Esophagus muscularis mucosa (tissue), 4 donors: ENCODE measurements at regions of chr1 and their contacts with region 1.

Region 1: DNA sequence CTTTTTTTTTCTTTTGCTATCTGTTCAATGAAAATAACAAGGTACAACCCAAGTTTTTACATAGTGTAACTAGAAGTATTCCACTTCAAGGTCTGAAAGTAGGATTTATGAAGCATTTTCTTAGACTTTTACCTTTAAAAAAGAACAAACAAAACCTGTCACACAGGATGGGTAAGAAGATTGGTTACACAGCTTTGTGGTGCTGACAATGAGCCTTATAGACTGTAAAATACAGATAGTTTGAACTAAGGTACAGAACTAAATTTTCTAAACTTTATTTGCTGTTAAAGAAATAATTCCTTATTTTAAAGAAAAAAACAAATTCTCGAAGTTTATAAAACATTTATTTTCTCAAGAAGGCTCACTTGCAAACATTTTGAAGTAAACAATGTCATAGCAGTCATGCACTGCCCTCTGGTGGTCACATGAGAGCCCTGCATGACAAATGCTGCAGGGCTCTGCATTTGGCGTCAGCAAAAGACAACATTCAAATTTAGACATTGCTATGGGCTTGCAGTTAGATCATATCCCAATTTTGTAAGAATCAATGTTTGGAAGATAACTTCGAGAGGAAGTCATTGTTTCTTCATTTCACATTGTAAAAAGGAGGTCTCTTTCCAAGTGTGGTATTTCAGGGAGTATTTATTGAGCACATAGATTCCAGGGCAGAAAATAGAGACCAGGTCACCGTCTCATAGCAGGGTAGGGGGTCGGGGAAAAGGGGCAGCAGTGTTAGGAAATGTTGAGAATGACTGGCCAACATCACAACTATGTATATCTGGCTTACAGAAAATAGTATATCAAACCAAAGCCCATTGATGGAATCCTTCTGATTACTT is 115.3 kb upstream of the FMN2 start:
- DNase-seq: peak; percentile 79
- H3K4me3 ChIP-seq: no peak overlapping the region
- H3K27ac ChIP-seq: no peak overlapping the region
- H3K4me1 ChIP-seq: no peaks in the 10 kb centered on the region
- H3K27me3 ChIP-seq: peaks cover 0 to 1% (median 0%) of the 10 kb centered on the region in 4 donors
- CTCF ChIP-seq: peak; percentile 89 to 99 (median 98)
- EP300 ChIP-seq: no peak
- POLR2A ChIP-seq: no peak

Region 2: GRCh38 chr1:238252033-238252802 is 1724.1 kb before region 1 on chr1:
- intact Hi-C with region 1: loop called (anchors 10 kb)
- DNase-seq: no peak
- H3K4me3 ChIP-seq: no peak overlapping the region
- H3K27ac ChIP-seq: no peak overlapping the region
- H3K4me1 ChIP-seq: no peaks in the 10 kb centered on the region
- H3K27me3 ChIP-seq: no peaks in the 10 kb centered on the region
- CTCF ChIP-seq: peak; percentile 43 to 57 (median 49)
- EP300 ChIP-seq: no peak
- POLR2A ChIP-seq: no peak

Region 3: GRCh38 chr1:240014051-240014450 is 37.7 kb after region 1 on chr1:
- intact Hi-C with region 1: no loop called
- DNase-seq: no peak
- H3K4me3 ChIP-seq: no peak overlapping the region
- H3K27ac ChIP-seq: no peak overlapping the region
- H3K4me1 ChIP-seq: no peaks in the 10 kb centered on the region
- H3K27me3 ChIP-seq: peaks cover 0 to 6% (median 0%) of the 10 kb centered on the region in 4 donors
- CTCF ChIP-seq: no peak
- EP300 ChIP-seq: no peak
- POLR2A ChIP-seq: no peak